Activated B cell treated with CpG ODN at 0.5 μM for 24 hours (primary cell): ENCODE measurements at regions of chr1 and their contacts with region 1.

Region 1: DNA sequence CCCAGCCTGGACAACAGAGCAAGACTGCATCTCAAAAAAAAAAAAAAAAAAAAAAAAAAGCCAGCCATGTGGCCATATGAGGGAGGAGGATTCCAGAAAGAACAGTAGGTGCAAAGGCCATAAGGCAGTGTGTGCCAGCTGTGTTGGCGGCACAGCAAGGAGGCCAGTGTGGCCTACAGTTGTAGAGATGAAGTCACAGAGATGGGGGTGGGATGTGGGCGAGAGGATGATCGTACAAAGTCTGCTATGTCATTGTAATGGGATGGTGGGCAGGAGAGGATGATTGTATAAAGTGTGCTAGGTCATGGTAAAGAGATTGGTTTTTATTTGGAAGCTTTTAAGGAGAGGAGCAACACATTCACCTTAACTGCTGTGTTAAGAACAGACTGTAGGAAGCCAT is 9.8 kb upstream of the CR1 start:
- DNase-seq: no peak
- ATAC-seq: no peak
- H3K4me3 Mint-ChIP-seq: no peak overlapping the region
- H3K27ac Mint-ChIP-seq: peak overlapping the region; percentile 0
- H3K4me1 Mint-ChIP-seq: no peaks in the 10 kb centered on the region
- H3K27me3 Mint-ChIP-seq: no peaks in the 10 kb centered on the region
- CTCF ChIP-seq: no peak

Region 2: GRCh38 chr1:207298653-207299346 is 187.4 kb before region 1 on chr1:
- CTCF ChIA-PET with region 1: no interaction called
- POLR2A ChIA-PET with region 1: no interaction called
- intact Hi-C with region 1: no loop called
- DNase-seq: no peak
- ATAC-seq: no peak
- H3K4me3 Mint-ChIP-seq: peak overlapping the region; percentile 0
- H3K27ac Mint-ChIP-seq: peak overlapping the region; percentile 85
- H3K4me1 Mint-ChIP-seq: peaks cover 25% of the 10 kb centered on the region
- H3K27me3 Mint-ChIP-seq: no peaks in the 10 kb centered on the region
- CTCF ChIP-seq: no peak

Region 3: GRCh38 chr1:207463021-207463420 is 23.2 kb before region 1 on chr1:
- CTCF ChIA-PET with region 1: no interaction called
- POLR2A ChIA-PET with region 1: no interaction called
- intact Hi-C with region 1: loop called (anchors 2 kb)
- DNase-seq: no peak
- ATAC-seq: no peak
- H3K4me3 Mint-ChIP-seq: no peak overlapping the region
- H3K27ac Mint-ChIP-seq: no peak overlapping the region
- H3K4me1 Mint-ChIP-seq: peaks cover 59% of the 10 kb centered on the region
- H3K27me3 Mint-ChIP-seq: no peaks in the 10 kb centered on the region
- CTCF ChIP-seq: no peak

Region 4: GRCh38 chr1:207822602-207823451 is 336.6 kb after region 1 on chr1:
- CTCF ChIA-PET with region 1: no interaction called
- POLR2A ChIA-PET with region 1: no interaction called
- intact Hi-C with region 1: no loop called
- DNase-seq: peak; percentile 67
- ATAC-seq: peak; percentile 66
- H3K4me3 Mint-ChIP-seq: peak overlapping the region; percentile 99
- H3K27ac Mint-ChIP-seq: peak overlapping the region; percentile 93
- H3K4me1 Mint-ChIP-seq: peaks cover 94% of the 10 kb centered on the region
- H3K27me3 Mint-ChIP-seq: peaks cover 2% of the 10 kb centered on the region
- CTCF ChIP-seq: no peak

Region 5: DNA sequence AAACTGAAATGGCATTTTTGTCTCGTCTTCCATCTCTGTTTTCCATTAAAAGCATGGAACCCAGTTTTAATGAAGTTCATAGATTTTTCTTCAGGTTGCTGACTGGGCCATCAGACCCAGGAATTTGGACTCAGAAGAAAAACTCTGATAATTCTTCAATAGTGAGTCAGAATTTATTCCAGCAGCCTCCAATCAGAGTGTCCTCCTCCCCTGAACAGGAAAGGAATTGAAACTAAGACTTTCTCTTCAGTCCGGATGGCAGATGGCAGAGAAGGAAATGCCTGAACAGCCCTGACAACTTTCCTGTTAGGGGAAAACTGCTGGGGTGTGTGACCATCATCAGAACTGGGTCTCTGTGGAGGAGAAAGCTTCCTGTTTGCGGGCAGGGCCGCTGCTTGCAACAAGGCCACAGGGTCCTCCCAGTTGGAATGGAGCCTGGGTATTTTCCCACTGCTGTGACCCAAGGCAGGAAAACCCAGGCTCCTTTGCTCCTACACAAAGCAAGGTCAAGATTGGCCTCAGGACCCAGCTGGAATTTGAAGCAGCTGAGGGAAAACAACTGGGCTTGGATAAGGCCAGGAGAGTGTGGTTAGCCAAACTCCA is 404.0 kb after region 1 on chr1:
- CTCF ChIA-PET with region 1: no interaction called
- POLR2A ChIA-PET with region 1: no interaction called
- intact Hi-C with region 1: no loop called
- DNase-seq: no peak
- ATAC-seq: no peak
- H3K4me3 Mint-ChIP-seq: no peak overlapping the region
- H3K27ac Mint-ChIP-seq: no peak overlapping the region
- H3K4me1 Mint-ChIP-seq: peaks cover 26% of the 10 kb centered on the region
- H3K27me3 Mint-ChIP-seq: peaks cover 7% of the 10 kb centered on the region
- CTCF ChIP-seq: no peak